ENCODE measurements at regions of chr2 and their contacts with region 1.

Region 1: DNA sequence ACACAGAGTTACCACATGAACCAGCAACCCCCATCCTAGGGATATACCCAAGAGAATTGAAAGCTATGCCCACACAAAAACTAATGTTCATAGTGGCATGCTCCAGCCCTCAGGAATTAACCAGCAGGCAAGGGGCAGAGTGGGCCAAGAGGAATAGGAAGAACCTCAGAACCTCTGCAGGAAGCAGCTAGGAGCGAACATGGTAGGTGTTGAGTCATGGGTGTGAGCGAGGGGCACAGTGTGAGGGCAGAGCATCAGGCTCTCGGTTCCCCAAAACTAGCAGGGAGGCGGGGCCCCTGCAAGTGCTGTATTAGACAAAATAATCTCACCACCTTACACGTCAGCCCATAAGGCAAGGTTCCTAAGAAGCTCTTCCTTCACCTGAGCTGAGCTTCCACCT is 5.6 kb upstream of the RUFY4 start:
- DNase-seq: no peak
- ATAC-seq: peak; percentile 88
- H3K4me3 ChIP-seq: no peak overlapping the region
- H3K4me3 Mint-ChIP-seq: no peak overlapping the region
- H3K27ac ChIP-seq: no peak overlapping the region
- H3K27ac Mint-ChIP-seq: no peak overlapping the region
- H3K4me1 ChIP-seq: peaks cover 0 to under 1% of the 10 kb centered on the region in 2 donors
- H3K4me1 Mint-ChIP-seq: peaks cover 0 to 14% (median under 1%) of the 10 kb centered on the region in 7 donors
- H3K27me3 ChIP-seq: no peaks in the 10 kb centered on the region
- H3K27me3 Mint-ChIP-seq: peaks cover 4 to 20% (median 19%) of the 10 kb centered on the region in 5 donors

Region 2: DNA sequence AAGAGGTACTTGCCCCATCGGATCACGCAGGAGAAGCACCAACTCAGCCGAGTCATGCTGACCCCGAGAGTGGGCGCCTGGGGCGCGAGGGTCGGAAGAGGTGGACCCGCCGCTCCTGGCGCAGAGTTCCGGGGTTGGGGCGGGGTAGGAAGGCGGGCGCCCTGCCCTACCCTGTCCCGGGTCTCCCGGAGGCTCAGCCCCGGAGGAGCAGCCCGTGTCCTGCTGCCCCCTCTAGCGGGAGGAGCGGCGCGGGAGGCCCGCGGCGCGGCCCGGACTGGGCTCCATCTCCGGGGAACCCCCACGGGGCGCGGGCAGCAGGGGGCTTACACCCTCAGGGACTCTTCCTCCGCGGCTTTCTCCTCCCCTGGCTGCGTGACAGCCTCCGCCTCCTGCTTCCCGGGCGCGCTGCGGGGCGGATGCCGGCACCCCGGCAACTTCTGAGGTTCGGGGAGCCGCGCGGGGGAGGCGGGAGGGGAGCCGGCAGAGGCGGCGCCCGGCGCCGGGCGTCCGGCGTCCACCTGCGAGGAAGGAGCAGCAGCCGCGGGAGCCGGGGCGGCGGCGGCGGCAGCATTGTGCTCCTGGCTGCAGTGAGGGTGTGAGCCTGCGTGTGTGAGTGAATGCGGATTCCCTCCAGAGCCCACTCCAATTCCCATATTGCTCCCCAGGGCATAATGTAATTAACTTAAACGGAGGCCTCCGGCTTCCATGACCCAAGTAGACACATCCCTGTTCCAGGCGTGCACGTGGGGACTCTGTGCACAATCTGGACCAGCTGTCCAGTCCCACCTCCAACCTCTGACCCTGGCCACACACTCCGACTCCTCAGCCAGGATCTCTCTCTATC is 53.1 kb before region 1 on chr2:
- CTCF ChIA-PET with region 1: no interaction called
- POLR2A ChIA-PET with region 1: no interaction called
- intact Hi-C with region 1: loop called in 1 of 2 experiments (anchors 1 kb)
- DNase-seq: peak in 7 of 9 donors; percentile 11 to 48 (median 19)
- ATAC-seq: peak; percentile 78
- H3K4me3 ChIP-seq: peak overlapping the region; percentile 46
- H3K4me3 Mint-ChIP-seq: peak overlapping the region; percentile 47 to 80 (median 72)
- H3K27ac ChIP-seq: no peak overlapping the region
- H3K27ac Mint-ChIP-seq: no peak overlapping the region
- H3K4me1 ChIP-seq: peaks cover 0 to 6% of the 10 kb centered on the region in 2 donors
- H3K4me1 Mint-ChIP-seq: peaks cover 0 to 14% (median 6%) of the 10 kb centered on the region in 7 donors
- H3K27me3 ChIP-seq: peaks cover 0 to 7% of the 10 kb centered on the region in 2 donors
- H3K27me3 Mint-ChIP-seq: peaks cover 28 to 58% (median 31%) of the 10 kb centered on the region in 5 donors

Region 3: GRCh38 chr2:218026676-218027425 is 36.6 kb before region 1 on chr2:
- CTCF ChIA-PET with region 1: no interaction called
- POLR2A ChIA-PET with region 1: no interaction called
- intact Hi-C with region 1: no loop called
- DNase-seq: peak in 1 of 9 donors; percentile 13
- ATAC-seq: no peak
- H3K4me3 ChIP-seq: no peak overlapping the region
- H3K4me3 Mint-ChIP-seq: no peak overlapping the region
- H3K27ac ChIP-seq: no peak overlapping the region
- H3K27ac Mint-ChIP-seq: no peak overlapping the region
- H3K4me1 ChIP-seq: no peaks in the 10 kb centered on the region
- H3K4me1 Mint-ChIP-seq: peaks cover 0 to 2% (median 0%) of the 10 kb centered on the region in 7 donors
- H3K27me3 ChIP-seq: no peaks in the 10 kb centered on the region
- H3K27me3 Mint-ChIP-seq: no peaks in the 10 kb centered on the region

Measured in naive thymus-derived CD4-positive, alpha-beta T cell (primary cell).